ENCODE measurements at regions of chr10 and their contacts with region 1.

Region 1: DNA sequence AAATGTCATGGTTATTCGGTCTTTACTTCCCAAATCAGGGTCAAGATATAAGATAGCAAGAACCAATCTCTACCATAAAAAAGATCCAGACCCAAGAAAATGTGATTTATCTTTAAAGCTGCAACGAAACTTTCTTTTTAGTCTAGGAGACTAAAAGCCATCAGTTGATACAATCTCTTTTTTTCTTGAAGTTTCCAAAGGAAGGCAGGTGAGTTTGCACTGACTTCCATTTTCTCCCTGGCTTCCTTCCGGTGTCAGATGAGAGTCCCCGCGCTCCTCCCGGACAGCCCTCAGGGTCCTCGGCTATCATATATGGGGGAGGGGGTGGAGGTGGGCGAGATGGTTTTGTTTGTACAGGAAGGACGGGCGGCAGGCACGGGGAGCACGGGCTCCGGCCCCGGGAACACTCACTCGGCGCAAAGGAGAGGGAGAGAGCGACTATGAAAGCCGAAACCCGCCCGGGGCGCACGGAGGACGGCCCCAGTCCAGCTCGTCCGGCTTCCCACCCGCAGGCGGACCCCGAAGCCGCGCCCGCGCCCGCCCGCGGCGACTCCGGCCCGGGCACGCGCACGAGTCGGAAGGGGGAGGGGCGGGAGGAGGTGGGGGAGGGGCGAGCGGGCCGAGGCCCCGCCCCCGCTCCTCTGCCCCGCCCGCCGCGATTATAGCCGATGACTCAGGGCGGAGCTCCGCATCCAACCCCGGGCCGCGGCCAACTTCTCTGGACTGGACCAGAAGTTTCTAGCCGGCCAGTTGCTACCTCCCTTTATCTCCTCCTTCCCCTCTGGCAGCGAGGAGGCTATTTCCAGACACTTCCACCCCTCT is at the start of gene BAG3:
- DNase-seq: peak; percentile 86
- H3K4me3 Mint-ChIP-seq: peak within 1 kb of the TSS; percentile 95
- H3K27ac Mint-ChIP-seq: peak within 1 kb of the TSS; percentile 91
- H3K4me1 Mint-ChIP-seq: peaks cover 43% of the 10 kb centered on the region
- H3K27me3 Mint-ChIP-seq: peaks cover 3% of the 10 kb centered on the region
- total RNA-seq, gene BAG3: 26.3 to 27.2 TPM

Region 2: GRCh38 chr10:119550827-119551226 is 100.1 kb before region 1 on chr10:
- CTCF ChIA-PET with region 1: no interaction called
- POLR2A ChIA-PET with region 1: no interaction called
- DNase-seq: no peak
- H3K4me3 Mint-ChIP-seq: no peak overlapping the region
- H3K27ac Mint-ChIP-seq: no peak overlapping the region
- H3K4me1 Mint-ChIP-seq: peaks cover 2% of the 10 kb centered on the region
- H3K27me3 Mint-ChIP-seq: peaks cover 47% of the 10 kb centered on the region

Region 3: DNA sequence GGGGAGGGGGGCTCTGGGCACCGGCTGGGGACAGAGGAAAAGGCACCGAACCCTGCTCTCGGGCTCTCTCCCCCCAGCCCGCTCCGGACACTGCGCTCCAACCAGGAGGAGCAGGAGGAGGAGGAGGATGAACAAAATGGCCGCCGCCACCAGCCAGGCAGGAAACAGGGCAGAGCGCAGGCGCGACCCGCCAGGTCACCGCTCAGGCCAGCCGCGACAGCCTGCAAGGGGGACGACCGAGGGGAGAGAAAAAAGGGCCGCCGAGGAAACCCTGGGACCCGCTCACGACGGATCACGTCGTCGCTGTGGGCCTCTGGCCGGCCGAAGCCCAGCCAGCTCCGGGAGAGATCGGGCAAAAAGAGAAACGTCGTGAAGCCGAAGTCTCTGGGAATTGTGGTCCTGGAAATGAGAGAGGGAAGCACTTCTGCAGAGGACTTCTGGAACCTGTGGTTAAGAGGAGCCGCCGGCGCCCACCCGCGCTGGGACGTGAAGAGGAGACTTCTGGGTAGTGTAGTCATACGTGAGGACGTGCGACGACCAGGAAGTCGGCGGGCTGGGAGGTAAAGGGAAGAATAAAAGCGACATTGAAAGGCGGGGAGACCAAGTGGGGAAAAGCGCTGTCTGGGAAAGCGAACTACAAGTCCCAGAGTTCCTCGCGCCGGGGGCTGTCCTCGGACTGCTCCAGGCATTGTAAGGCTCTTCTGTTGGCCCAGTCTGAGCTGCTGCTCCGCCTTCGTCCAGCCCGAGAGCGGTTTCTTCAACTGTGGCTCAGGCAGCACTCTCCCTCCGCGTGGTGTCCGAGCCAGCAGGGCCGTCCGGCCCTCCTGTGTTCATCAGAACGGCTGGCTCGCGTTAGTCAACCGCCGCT is 54.1 kb before region 1 on chr10 and contains the start of gene TIAL1:
- CTCF ChIA-PET with region 1: no interaction called
- POLR2A ChIA-PET with region 1: interaction called, 36 read pairs
- DNase-seq: peak; percentile 96
- H3K4me3 Mint-ChIP-seq: peak within 1 kb of the TSS; percentile 92
- H3K27ac Mint-ChIP-seq: peak within 1 kb of the TSS; percentile 97
- H3K4me1 Mint-ChIP-seq: peaks cover 45% of the 10 kb centered on the region
- H3K27me3 Mint-ChIP-seq: no peaks in the 10 kb centered on the region
- total RNA-seq, gene TIAL1: 168 to 170 TPM

Region 4: DNA sequence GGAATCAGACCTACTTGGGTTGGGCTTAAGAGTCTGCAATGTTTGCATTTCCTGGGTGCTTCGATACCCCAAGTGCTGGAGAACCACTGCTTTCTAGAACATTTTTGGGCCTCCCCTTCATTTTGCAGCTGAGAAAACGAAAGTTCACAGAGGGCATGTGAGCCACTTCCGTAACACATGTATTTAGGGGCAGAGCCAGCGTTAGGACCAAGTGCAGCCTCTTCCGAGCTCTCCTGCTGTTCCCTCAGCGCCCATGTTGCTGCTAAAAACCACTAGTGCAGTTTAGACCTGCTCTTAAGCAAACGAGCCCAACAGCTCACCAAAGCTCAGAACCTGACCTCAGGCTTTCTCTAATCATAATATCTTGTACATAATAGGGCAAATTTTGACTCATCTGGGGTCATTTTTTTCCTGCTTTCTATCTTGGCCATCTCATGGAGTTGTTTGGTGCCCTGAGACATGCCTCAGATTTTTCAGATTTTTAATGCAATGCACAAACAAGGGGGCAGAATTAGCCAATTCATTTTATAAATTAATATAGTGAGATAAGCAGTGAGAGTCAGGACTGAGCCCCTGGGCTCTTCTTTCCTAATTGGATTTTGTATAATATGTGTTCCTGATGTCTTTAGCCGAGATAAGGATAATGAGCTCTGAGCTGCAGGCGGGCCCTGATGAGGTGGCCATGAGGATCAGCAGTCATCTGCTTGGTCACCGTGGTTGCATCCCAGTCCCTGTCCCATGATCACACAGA is 13.1 kb after region 1 on chr10:
- CTCF ChIA-PET with region 1: interaction called, 7 read pairs
- POLR2A ChIA-PET with region 1: interaction called, 111 read pairs
- DNase-seq: peak; percentile 72
- H3K4me3 Mint-ChIP-seq: peak overlapping the region; percentile 67
- H3K27ac Mint-ChIP-seq: peak overlapping the region; percentile 95
- H3K4me1 Mint-ChIP-seq: peaks cover 45% of the 10 kb centered on the region
- H3K27me3 Mint-ChIP-seq: no peaks in the 10 kb centered on the region

Measured in activated CD4-positive, alpha-beta memory T cell treated with anti-CD3 and anti-CD28 coated beads, Interleukin-2, amount 10 ng/mL, durations not matched to agents 7 days and 5 days (primary cell).